ENCODE measurements at regions of chr12 and their contacts with region 1.

Region 1: DNA sequence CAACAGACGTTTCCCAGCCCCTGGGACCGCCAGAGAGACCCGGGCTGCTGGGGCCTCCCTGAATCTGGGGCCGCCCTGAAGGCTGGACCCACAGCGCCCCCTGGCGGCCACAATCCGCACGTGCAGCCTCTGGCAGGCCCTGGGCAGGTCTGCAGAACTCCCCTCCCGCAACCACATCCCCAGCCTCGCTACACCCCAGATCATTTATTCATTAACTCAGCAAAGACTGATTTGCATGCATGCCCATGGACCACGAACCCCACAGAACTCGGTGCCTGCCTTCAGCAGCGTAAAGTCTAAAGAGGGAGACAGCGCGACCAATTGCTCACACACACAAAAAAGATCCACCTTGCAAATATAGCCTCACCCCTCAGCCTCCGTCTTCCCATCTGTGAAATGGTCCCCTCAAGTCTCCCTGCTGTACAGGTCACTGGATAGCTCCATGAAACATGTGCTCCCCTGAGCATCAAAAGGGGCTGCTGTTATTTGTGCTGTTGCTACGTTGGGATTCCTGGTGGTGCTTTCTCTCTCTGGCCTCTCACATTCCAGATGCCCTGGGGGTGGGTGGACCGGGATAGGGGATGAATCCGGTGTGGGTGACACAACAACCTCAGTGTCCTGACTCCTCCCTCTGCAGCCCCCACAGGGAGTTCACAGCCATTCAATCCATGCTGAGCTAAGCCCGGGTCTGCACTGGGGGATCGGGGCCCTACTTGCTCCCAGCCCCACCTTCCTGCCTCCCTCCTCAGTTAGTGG is 96.4 kb downstream of the SCARB1 start:
- DNase-seq: peak; percentile 95
- H3K4me3 Mint-ChIP-seq: no peak overlapping the region
- H3K27ac Mint-ChIP-seq: no peak overlapping the region
- H3K4me1 Mint-ChIP-seq: peaks cover 14% of the 10 kb centered on the region
- H3K27me3 Mint-ChIP-seq: peaks cover 24% of the 10 kb centered on the region

Region 2: GRCh38 chr12:124036674-124037109 is 730.6 kb before region 1 on chr12:
- intact Hi-C with region 1: loop called (anchors 1 kb)
- DNase-seq: peak; percentile 77
- H3K4me3 Mint-ChIP-seq: no peak overlapping the region
- H3K27ac Mint-ChIP-seq: no peak overlapping the region
- H3K4me1 Mint-ChIP-seq: no peaks in the 10 kb centered on the region
- H3K27me3 Mint-ChIP-seq: peaks cover 26% of the 10 kb centered on the region

Region 3: DNA sequence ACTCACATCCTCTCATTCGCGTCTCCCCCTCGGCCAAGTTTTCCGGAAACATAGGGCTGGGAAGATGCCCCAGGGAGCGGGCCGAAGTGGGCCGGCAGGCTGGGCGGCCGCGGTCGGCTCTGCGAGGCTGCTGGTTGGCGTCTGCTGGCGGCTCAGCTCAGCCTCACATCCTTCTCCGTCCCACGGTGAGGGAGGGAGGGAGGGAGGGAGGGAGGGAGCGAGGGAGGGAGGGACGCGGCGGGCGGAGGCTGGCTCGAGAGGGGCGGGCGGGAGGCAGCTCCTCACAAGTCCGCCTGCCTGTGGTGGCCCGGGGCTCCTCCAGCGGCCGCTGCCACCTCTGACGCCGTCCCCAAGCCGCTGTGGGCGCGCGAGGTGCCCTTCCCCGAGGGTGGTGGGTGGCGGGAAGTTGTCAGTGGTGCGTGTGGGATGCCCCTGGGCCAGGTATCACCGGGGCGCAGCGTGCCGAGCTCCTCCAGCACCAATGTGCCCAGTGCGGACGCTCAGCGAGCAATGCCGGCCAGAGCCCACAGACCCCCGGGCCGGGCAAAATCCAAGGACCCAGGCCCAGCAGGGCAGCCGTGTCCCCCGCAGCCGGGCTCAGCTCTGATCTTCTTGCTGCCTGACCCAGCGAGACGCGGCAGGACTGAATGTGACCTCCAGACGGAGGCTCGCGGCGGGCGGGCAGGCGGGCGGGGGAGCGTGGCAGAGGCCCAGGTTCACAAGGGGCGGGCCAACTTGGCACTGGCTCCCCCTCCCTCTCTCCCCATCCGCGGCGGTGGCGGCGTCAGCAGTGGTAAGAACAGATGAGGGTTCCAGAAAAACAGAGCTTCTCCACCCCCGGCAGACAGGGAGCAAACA is 378.3 kb before region 1 on chr12:
- intact Hi-C with region 1: loop called (anchors 5 kb)
- DNase-seq: peak; percentile 82
- H3K4me3 Mint-ChIP-seq: peak overlapping the region; percentile 58
- H3K27ac Mint-ChIP-seq: peak overlapping the region; percentile 37
- H3K4me1 Mint-ChIP-seq: peaks cover 24% of the 10 kb centered on the region
- H3K27me3 Mint-ChIP-seq: no peaks in the 10 kb centered on the region

Region 4: DNA sequence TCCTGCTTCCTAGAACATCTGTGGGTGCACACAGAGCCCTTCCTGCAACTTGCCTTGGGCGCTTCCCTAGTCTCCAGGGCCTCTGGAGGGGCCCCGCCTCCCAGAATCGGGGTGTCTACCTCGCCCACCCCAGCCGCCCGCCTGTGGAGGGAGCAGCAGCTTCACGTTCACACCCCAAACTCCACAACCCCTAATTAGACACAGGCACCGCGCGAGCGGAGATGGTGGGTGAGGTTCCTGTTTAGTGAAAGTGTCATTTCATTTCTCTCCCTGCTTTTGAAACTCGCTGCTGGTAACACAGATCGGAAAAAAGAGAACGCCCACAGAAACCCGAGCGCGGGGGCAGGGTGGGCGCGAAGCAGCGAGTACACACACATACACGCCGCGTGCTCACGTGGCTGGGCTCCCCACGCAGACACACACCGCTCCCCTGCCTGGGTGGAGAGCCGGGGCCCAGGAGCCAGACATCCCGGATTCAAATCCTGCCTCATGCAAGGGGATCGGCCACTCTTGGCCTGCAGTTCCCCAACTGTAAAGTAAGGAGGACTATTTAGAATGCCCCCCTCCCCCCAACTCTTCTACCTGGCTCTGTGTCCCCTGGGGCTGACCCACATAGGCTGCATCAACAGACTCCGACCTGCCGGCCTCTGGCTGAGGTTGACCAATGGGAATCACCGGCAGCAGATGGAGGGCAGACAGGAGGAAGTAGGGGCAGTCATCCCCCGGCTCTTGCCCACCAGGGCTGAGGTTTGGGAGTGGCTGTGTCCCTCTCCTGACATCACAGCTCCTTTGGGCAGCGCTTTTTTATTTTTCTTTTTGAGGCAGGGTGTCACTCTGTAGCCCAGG is 120.6 kb before region 1 on chr12:
- intact Hi-C with region 1: loop called (anchors 5 kb)
- DNase-seq: peak; percentile 62
- H3K4me3 Mint-ChIP-seq: peak overlapping the region; percentile 37
- H3K27ac Mint-ChIP-seq: no peak overlapping the region
- H3K4me1 Mint-ChIP-seq: peaks cover 10% of the 10 kb centered on the region
- H3K27me3 Mint-ChIP-seq: peaks cover 15% of the 10 kb centered on the region

Region 5: DNA sequence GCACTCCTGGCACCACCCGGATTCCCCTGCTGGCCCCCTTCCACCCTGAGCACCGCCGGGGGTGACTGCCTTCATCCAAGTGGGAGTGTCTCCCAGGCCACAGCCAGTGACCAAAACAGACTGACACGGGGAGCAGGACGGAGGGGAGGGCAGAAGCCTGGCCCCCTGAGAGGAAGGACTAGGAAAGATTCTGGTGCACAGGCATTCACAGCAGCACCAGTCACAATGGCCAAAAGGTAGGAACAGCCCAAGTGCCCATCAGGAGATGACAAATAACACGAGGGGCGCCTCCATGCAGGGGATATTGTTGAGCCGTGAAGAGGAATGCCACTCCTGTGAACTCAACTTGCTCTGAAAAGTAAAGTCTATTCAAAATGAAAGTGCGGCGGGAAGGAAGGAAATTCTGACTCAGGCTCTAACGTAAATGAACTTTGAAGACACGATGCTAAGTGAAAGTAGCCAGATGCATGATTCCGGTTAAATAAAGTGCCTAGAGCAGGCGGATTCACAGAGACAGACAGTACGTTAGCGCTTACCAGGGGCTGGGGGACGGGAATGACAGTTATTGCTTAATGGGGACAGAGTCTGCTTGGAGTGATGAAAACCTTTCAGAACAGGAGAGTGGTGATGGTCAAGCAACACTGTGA is 53.7 kb before region 1 on chr12:
- intact Hi-C with region 1: loop called (anchors 2 kb)
- DNase-seq: peak; percentile 90
- H3K4me3 Mint-ChIP-seq: peak overlapping the region; percentile 58
- H3K27ac Mint-ChIP-seq: peak overlapping the region; percentile 78
- H3K4me1 Mint-ChIP-seq: peaks cover 18% of the 10 kb centered on the region
- H3K27me3 Mint-ChIP-seq: peaks cover 20% of the 10 kb centered on the region

Region 6: DNA sequence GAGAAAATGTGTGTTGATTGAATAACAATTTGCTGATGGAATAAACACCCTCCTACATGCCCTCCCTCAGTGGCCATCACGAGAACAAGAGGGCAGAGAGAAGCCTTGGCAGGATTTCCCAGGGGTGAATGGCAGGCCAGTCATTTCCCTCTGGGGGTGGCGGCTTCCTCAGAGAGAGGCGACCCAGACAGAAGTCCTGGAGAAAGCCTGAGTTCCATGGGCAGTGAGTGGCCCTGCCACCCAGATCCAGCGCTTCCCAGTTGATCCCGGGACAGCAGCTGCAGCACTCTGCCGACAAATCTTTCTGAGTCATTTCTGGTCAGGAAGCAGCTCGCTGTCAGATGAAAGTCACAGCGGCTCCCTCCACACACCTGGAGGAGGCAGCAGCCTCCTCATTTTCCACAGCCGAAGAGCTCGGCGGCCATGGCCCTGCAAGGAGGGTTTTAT is 26.5 kb before region 1 on chr12:
- intact Hi-C with region 1: loop called (anchors 2 kb)
- DNase-seq: peak; percentile 63
- H3K4me3 Mint-ChIP-seq: no peak overlapping the region
- H3K27ac Mint-ChIP-seq: no peak overlapping the region
- H3K4me1 Mint-ChIP-seq: peaks cover 23% of the 10 kb centered on the region
- H3K27me3 Mint-ChIP-seq: peaks cover 10% of the 10 kb centered on the region

Region 7: GRCh38 chr12:124786061-124786964 is 19.1 kb after region 1 on chr12:
- intact Hi-C with region 1: no loop called
- DNase-seq: no peak
- H3K4me3 Mint-ChIP-seq: no peak overlapping the region
- H3K27ac Mint-ChIP-seq: no peak overlapping the region
- H3K4me1 Mint-ChIP-seq: no peaks in the 10 kb centered on the region
- H3K27me3 Mint-ChIP-seq: no peaks in the 10 kb centered on the region

Region 8: GRCh38 chr12:124863416-124864325 is 96.4 kb after region 1 on chr12 and contains the start of gene SCARB1:
- intact Hi-C with region 1: loop called (anchors 10 kb)
- DNase-seq: peak; percentile 92
- H3K4me3 Mint-ChIP-seq: peak within 1 kb of the TSS; percentile 84
- H3K27ac Mint-ChIP-seq: peak within 1 kb of the TSS; percentile 95
- H3K4me1 Mint-ChIP-seq: peaks cover 18% of the 10 kb centered on the region
- H3K27me3 Mint-ChIP-seq: peaks cover 7% of the 10 kb centered on the region
- total RNA-seq, gene SCARB1: 23.8 and 25.6 TPM in 2 replicates

Region 9: DNA sequence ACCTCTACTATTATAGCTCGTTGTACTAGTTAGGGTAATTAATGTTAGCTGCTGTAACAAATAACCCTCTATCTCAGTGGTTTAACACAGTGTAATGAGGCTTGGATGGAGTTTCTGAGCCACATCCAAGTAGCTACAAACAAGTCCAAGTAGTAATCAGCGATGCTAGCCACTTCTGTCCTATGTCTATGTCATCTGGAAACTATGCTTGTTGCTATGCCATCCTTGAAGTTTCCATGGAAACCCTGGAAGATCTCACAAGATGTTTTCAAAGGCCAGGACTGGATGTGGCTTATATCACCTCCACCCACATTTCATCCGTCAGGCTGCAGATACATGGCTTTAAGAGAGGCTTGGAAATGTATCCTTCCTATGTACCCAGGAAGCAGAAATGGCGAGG is 720.1 kb after region 1 on chr12:
- intact Hi-C with region 1: no loop called
- DNase-seq: no peak
- H3K4me3 Mint-ChIP-seq: no peak overlapping the region
- H3K27ac Mint-ChIP-seq: no peak overlapping the region
- H3K4me1 Mint-ChIP-seq: no peaks in the 10 kb centered on the region
- H3K27me3 Mint-ChIP-seq: no peaks in the 10 kb centered on the region